Natural killer cell (primary cell): ENCODE measurements at regions of chr7 and their contacts with region 1.

Region 1: GRCh38 chr7:124428781-124429180 is 336.8 kb downstream of the GPR37 start:
- DNase-seq: no peak
- ATAC-seq: no peak
- H3K4me3 ChIP-seq: no peak overlapping the region
- H3K4me3 Mint-ChIP-seq: no peak overlapping the region
- H3K27ac ChIP-seq: no peak overlapping the region
- H3K27ac Mint-ChIP-seq: no peak overlapping the region
- H3K4me1 ChIP-seq: no peaks in the 10 kb centered on the region
- H3K4me1 Mint-ChIP-seq: no peaks in the 10 kb centered on the region
- H3K27me3 ChIP-seq: no peaks in the 10 kb centered on the region
- H3K27me3 Mint-ChIP-seq: no peaks in the 10 kb centered on the region
- CTCF ChIP-seq: no peak

Region 2: DNA sequence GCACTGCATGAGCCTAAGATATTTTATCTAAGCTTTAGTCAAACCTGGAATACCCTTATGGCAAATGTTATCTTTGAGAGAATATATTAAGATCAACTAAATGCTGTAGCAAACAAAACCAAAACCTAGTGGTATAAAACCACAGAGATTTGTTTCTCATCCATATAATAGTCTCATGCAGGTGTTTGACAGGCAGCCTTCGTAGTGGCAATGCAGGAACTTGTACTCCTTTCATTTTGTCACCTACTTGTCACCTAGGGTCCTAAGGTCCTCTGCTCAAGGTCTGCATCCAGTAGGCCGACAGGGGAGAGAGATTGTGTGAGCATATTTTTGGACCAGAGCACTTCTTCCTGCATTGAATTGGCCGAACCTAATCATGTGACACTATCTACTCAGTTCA is 15.8 kb before region 1 on chr7:
- intact Hi-C with region 1: loop called (anchors 1 kb)
- DNase-seq: no peak
- ATAC-seq: no peak
- H3K4me3 ChIP-seq: no peak overlapping the region
- H3K4me3 Mint-ChIP-seq: no peak overlapping the region
- H3K27ac ChIP-seq: no peak overlapping the region
- H3K27ac Mint-ChIP-seq: no peak overlapping the region
- H3K4me1 ChIP-seq: no peaks in the 10 kb centered on the region
- H3K4me1 Mint-ChIP-seq: no peaks in the 10 kb centered on the region
- H3K27me3 ChIP-seq: no peaks in the 10 kb centered on the region
- H3K27me3 Mint-ChIP-seq: no peaks in the 10 kb centered on the region
- CTCF ChIP-seq: no peak